ENCODE measurements at regions of chr4 and their contacts with region 1.

Region 1: DNA sequence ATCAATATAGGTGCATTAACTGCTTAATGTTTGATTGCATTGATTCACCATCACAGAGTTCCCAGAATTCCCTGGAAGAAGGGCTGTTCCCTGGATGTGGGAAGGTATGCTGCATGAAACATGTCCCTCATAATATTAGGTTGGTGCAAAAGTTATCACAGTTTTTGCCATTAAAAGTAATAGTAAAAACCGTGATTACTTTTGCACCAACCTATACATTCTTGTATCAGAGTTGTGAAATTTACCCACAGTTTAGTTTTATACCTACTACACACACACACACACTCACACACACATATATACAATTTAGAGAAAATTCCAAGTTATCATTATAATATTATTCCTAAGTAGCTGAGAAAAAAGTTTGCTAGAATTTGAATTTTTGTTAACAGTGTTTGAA is 321.0 kb downstream of the ARHGAP24 start:
- DNase-seq: no peak
- H3K4me3 ChIP-seq: no peak overlapping the region
- H3K27ac ChIP-seq: no peak overlapping the region
- H3K4me1 ChIP-seq: no peaks in the 10 kb centered on the region
- H3K27me3 ChIP-seq: no peaks in the 10 kb centered on the region
- CTCF ChIP-seq: no peak

Region 2: DNA sequence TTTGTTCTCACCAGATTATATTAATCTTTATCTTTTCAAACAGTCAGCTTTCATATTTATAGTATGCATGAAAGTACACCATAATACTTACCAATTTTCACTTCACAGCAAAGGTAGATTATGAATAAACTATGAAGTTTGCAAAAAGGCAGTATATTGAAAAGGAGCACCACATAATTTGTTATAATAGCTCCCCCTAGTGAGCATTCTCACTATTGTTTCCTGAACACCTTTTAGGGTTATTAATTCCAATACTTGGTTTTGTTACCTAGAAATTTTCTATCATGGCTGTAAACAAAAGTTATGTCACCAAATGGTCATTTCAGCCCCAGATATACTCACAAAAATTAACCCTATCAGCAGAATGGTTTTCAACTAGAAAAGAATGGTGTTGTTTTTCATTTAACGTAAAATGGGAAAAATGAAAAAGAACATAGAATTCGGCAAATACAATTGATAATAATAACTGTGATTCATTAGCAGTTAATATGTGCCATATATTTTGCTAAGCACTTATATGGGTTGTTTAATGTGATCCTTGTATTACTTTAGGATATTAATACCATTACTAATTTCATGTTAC is 1266.7 kb before region 1 on chr4:
- intact Hi-C with region 1: no loop called
- DNase-seq: no peak
- H3K4me3 ChIP-seq: no peak overlapping the region
- H3K27ac ChIP-seq: no peak overlapping the region
- H3K4me1 ChIP-seq: no peaks in the 10 kb centered on the region
- H3K27me3 ChIP-seq: no peaks in the 10 kb centered on the region
- CTCF ChIP-seq: peak; percentile 49

Region 3: DNA sequence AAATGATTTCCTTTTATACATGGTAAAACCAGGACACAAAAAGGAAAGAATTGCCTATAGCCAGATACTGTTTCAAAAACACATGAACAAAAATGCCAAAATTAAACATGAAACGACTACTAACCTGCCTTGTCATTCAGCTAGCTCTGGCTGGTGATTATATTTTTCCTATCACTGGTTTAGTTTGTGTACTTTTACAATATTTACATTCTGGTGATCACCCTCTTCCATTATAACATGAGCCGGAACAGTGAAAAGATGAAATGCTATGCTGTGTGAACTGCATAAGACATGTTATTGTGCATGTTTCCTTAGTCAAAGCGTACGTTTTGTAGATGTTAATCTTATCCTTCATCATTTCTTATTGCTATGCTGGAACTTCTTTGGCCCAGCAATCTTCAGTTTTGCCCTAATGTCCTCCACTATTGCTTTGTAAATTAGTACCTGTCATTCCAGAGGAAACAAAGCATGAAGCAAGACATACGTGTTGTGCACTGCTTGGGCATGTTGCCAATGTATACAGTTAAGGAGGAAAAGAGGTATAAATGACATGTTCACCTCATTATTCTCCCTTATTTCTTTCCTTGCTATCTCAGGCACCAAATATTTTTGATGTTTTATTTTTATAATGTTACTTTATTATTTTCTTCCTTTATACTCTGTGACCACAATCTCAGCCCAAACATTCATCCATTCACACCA is 65.3 kb after region 1 on chr4:
- intact Hi-C with region 1: no loop called
- DNase-seq: peak; percentile 38
- H3K4me3 ChIP-seq: no peak overlapping the region
- H3K27ac ChIP-seq: no peak overlapping the region
- H3K4me1 ChIP-seq: no peaks in the 10 kb centered on the region
- H3K27me3 ChIP-seq: no peaks in the 10 kb centered on the region
- CTCF ChIP-seq: no peak

Region 4: DNA sequence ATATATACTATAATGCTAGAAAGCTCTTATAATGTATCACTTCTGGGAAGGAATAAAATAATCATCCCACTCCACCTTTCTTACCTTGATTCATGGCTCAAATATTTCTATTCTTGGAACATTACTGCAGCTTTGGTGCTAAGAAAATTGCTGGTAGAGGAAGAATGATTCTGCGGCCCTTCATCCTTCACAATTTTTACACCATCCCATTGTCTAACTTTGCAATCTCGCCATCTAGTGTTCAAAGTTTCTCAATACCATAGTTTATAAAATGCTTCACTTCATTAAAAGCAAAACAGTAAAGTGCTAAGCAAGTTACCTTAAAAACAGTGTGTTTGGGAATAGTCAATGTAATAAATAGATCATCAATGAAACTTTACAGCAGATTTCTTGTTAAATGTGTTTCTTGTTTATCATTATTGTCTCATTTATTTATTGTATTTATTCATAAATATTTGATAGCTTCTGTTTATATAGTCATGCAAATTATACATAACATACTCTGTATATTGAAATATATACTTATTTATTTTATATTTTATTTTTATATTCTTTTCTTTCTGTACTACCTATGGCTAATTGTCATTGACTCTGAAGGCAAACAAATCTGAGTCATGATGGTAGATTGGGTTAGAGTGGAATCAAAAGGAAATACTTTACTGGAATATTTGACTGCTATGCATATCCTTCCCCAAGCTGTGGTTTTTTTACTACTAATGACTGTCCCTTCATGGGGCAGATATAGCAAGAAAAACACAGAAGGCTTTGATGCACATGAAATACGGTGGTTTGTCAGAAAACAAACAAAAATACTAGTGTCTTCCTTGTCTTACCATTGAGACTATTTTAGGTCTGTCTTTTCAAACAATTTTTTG is 173.2 kb after region 1 on chr4:
- intact Hi-C with region 1: loop called (anchors 2 kb)
- DNase-seq: no peak
- H3K4me3 ChIP-seq: no peak overlapping the region
- H3K27ac ChIP-seq: no peak overlapping the region
- H3K4me1 ChIP-seq: no peaks in the 10 kb centered on the region
- H3K27me3 ChIP-seq: no peaks in the 10 kb centered on the region
- CTCF ChIP-seq: peak; percentile 56